ENCODE measurements at regions of chr5 and their contacts with region 1.

Region 1: DNA sequence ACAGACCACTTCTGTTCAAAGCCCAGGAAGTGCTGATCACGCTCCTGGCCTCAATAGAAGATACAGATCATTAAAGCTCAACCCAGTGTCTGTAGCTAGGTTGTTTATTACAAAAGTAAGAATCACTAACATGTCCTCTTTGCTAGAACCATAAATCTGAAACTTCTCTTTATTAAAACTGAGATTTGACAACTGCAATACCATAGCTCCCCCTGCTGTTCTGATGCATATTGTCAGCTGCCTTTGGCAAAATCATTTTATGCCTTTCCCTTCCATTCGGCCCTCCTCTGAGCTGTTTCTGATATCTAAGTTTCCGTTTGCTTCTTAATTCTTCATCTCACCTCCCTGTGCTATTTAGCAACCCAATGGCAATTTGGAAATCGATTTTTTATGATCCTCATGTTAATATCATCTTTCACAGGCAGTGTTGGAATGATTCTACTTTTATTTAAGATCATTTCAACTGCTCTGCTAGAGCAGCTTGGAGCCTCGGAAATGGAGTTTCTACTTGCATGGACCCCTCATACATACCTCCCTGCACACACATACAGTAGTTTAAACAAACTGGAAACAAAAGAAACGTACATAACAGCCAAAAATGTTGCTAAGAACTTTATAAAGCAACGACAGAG is 998.8 kb downstream of the MAT2B start:
- DNase-seq: peak; percentile 21
- H3K4me3 ChIP-seq: no peak overlapping the region; a peak in 1 of 4 replicates
- H3K27ac ChIP-seq: peak overlapping the region in 1 of 2 experiments; percentile 83; a peak in 2 of 4 replicates
- H3K4me1 ChIP-seq: peaks cover 0 to 9% of the 10 kb centered on the region in 2 experiments; a peak in 2 of 4 replicates
- H3K27me3 ChIP-seq: no peaks in the 10 kb centered on the region
- CTCF ChIP-seq: peak; percentile 90
- EP300 ChIP-seq: peak in 1 of 2 experiments; percentile 22; a peak in 1 of 4 replicates
- RAD21 ChIP-seq: peak; percentile 95

Region 2: DNA sequence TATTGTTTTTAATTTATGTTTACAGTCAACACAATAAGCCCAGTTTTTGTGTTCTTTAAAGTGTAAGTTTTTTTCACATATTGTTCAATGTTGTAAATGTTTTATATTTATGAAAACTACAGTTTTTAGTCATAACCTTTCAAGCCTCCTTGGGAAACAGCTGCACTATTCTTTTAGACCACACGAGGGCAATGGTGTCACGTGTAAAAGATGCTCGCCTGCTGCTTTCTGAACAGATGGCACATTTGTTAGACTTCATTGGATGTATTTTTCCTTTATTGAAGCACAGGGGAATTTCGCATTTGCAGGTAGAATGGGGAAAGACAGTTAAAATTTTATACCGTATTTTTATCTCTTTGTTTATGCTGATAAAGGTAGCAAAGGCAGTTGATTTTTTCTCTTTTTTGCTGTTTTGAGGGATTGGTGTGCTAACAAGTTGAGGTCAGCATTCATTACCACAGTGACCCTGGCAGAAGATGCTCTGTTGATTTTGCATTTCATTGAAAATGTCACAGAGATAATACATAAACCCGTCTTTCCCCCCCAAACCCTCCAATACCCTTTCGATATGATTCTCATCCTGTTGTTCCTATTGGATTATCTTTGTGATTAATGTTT is 939.8 kb before region 1 on chr5:
- CTCF ChIA-PET with region 1: interaction called, 29 read pairs
- POLR2A ChIA-PET with region 1: no interaction called
- DNase-seq: peak; percentile 58
- H3K4me3 ChIP-seq: no peak overlapping the region; a peak in 1 of 4 replicates
- H3K27ac ChIP-seq: peak overlapping the region in 1 of 2 experiments; percentile 64; a peak in 1 of 4 replicates
- H3K4me1 ChIP-seq: peaks cover 0 to 16% of the 10 kb centered on the region in 2 experiments; a peak in 3 of 4 replicates
- H3K27me3 ChIP-seq: no peaks in the 10 kb centered on the region
- CTCF ChIP-seq: peak; percentile 95
- EP300 ChIP-seq: peak in 1 of 2 experiments; percentile 9; a peak in 1 of 4 replicates
- RAD21 ChIP-seq: peak; percentile 98

Region 3: DNA sequence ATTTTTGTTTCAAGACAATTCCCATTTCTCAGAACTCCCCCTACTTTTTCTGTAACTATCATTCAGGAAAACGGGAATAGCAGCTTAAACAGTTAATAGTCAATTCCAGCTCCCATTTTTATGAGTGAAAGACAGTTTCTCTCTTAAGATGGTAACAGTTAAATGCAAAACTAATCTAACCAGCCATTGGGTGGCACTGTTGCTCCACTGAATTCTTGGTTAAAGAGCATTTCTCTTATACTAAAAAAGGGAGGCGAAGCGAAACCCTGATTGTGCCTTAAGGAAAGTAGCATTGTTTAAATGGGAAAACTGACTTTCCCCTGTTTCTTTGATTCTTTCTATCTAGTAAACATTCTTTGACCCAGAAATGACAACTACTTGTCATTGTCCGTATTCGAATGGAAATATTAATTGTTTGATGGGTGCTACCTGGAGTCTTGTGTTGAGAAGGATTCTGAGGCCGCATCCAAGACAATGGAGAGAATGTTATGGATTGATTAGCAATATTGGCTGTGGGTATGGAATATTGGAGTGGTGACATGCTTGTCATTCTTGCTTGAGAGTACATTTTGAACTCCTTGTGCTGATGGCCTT is 491.1 kb before region 1 on chr5:
- CTCF ChIA-PET with region 1: interaction called, 27 read pairs
- POLR2A ChIA-PET with region 1: no interaction called
- DNase-seq: peak; percentile 27
- H3K4me3 ChIP-seq: no peak overlapping the region
- H3K27ac ChIP-seq: no peak overlapping the region
- H3K4me1 ChIP-seq: no peaks in the 10 kb centered on the region; a peak in 1 of 4 replicates
- H3K27me3 ChIP-seq: no peaks in the 10 kb centered on the region
- CTCF ChIP-seq: peak; percentile 82
- EP300 ChIP-seq: no peak
- RAD21 ChIP-seq: peak; percentile 94

Region 4: DNA sequence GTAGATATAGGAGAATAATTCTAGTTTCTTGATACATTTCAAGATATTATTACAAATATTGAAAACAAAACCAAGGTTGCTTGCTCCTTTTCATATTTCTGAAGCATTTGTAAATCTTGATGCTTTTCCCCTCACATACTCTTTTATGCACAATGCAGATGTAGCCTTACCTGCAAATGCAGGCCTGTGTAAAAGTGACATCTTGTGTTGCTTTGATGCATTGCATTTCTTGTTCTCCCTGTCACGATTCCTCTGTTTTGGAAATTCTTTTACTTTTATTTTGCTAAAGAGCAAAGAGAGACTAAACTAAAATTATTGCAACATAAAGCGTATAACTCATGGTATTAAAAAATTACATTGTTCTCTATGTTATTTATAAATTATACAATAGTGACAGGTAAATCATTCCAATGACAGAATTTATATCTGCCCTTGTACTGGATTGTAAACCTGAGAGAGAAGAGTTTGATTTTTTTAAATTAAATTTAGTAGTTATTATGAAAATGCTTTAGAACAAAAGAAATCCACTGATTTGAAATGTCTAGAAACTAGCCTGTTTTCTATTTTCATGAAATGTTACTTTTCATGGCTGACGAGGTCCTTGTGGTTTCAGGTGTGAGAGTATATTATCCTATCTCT is 28.8 kb before region 1 on chr5:
- CTCF ChIA-PET with region 1: interaction called, 11 read pairs
- POLR2A ChIA-PET with region 1: no interaction called
- DNase-seq: peak; percentile 25
- H3K4me3 ChIP-seq: no peak overlapping the region
- H3K27ac ChIP-seq: no peak overlapping the region; a peak in 1 of 4 replicates
- H3K4me1 ChIP-seq: no peaks in the 10 kb centered on the region; a peak in 1 of 4 replicates
- H3K27me3 ChIP-seq: no peaks in the 10 kb centered on the region
- CTCF ChIP-seq: peak; percentile 83
- EP300 ChIP-seq: no peak
- RAD21 ChIP-seq: peak; percentile 99

Region 5: DNA sequence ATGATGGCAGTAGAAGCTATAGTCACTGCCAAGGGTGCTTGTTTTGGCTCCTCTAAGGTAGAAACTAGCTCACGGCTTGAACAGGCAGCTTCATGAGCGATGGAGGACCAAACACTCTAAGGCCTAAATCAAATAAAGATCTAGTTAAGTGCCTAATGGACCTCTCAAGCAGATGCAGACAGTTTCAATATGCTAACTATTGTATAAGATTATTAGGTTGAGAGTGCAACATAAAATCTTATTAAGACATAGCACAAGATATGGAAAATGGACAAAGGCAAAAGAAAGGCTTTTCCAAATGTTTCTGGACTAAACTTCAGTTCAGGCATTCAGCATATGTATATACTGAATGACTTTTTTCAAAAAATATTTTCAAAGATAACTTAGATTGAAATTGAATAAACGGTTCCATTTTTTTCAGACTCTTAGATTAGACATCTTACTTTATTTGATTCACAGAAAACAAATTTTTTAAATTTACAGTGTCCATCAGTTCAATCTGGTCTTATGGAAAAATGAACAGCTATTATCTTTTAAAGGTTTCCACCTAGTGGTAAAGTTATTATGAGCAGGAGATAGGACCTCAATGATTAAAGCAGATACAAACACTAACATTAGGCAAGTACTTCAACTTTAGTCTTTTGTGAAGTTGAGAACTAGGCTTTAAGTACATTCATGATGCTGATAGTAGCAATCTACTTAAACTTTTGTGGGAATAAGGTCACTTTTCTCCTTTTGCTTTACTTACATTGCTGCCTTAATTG is 168.9 kb after region 1 on chr5:
- CTCF ChIA-PET with region 1: interaction called, 25 read pairs
- POLR2A ChIA-PET with region 1: no interaction called
- DNase-seq: peak; percentile 32
- H3K4me3 ChIP-seq: no peak overlapping the region
- H3K27ac ChIP-seq: no peak overlapping the region
- H3K4me1 ChIP-seq: peaks cover 0 to 8% of the 10 kb centered on the region in 2 experiments; a peak in 2 of 4 replicates
- H3K27me3 ChIP-seq: no peaks in the 10 kb centered on the region
- CTCF ChIP-seq: peak; percentile 59
- EP300 ChIP-seq: peak in 1 of 2 experiments; percentile 77; a peak in 2 of 4 replicates
- RAD21 ChIP-seq: peak; percentile 70

Region 6: DNA sequence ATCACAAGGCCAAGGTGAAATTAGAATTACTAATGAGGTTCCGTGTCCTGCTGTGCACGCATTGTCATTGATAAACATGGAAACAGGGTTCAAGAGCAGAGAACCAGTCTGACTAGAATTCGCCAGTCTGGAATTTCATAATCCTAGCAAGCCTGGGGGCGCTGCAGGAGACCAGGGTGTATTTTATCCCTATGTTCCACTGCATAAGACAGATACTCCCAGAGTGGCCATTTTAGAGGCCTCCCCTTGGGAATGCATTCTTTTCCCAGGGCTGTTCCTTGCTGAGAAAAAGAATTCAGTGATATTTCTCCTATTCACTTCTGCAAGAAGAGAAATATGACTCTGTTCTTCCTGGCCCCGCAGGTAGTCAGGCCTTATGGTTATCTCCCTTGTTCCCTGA is 388.8 kb after region 1 on chr5:
- CTCF ChIA-PET with region 1: no interaction called
- POLR2A ChIA-PET with region 1: no interaction called
- DNase-seq: no peak
- H3K4me3 ChIP-seq: no peak overlapping the region
- H3K27ac ChIP-seq: no peak overlapping the region
- H3K4me1 ChIP-seq: no peaks in the 10 kb centered on the region
- H3K27me3 ChIP-seq: no peaks in the 10 kb centered on the region
- CTCF ChIP-seq: no peak
- EP300 ChIP-seq: no peak
- RAD21 ChIP-seq: no peak

Measured in SK-N-SH (cell line).